ENCODE measurements at regions of chr10 and their contacts with region 1.

Region 1: DNA sequence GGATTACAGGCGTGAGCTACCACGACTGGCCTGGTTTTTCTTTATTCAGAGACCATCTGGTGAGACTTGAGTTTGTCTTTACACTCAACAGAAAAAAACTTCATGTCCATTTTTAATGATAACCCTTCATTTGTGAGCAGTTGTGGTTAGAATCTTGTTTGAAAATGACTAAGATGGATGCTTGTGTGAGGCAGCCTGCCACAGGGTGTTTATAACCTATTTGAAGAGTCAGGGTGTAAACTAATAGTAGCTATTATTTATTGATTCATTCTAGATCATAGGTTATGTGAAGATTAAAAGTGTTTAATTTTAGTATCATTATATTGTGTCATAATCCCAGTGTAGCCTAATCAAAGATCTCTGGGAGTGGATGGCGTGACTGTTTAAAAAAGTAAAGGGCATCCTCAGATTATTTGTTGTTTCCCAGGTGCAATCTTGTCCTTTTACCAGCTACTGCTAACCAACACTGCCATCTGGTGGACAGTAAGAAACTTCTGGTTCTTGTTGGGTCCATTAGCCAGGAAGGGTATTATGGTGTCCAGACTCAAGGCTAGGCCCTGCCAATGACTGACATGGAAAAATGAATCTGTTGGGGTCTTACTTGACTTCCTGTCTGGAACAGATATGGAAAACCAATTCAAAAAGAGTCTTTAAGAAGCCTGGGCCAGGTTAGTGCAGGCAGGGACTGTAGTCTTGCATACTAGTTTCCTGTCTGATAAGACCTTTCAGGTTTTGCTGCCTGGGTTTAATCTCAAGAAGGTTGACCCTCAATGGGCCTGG is 24.9 kb downstream of the NRBF2 start:
- DNase-seq: peak in 1 of 2 donors; percentile 28
- ATAC-seq: peak; percentile 67 to 77 (median 71)
- H3K4me3 ChIP-seq: no peak overlapping the region
- H3K27ac ChIP-seq: no peak overlapping the region
- H3K4me1 ChIP-seq: peaks cover 0 to 24% (median 13%) of the 10 kb centered on the region in 9 donors
- H3K27me3 ChIP-seq: no peaks in the 10 kb centered on the region
- CTCF ChIP-seq: peak; percentile 55 to 89 (median 84)

Region 2: DNA sequence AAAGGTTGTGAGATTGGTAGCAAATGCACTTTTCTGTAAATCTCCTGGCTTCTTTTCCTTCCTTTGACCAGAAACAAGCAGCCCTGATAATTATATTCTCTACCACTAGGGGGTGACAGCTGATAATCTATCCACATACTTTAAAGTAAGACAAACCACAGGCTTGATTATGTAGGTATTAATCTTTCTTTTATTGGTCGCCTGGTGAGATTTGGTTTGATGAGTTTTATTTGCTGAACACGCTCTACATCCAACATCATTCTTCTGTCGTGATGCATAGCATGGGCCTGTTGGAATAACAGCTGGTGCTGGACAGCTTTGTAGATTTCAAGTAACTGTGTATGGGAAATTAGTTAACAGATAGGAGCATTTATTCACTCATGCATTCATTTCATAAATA is 720.3 kb before region 1 on chr10:
- intact Hi-C with region 1: loop called in 7 of 10 experiments (anchors 2 to 10 kb)
- DNase-seq: peak in 1 of 2 donors; percentile 29
- ATAC-seq: peak in 4 of 8 donors; percentile 56 to 69 (median 63)
- H3K4me3 ChIP-seq: no peak overlapping the region
- H3K27ac ChIP-seq: no peak overlapping the region
- H3K4me1 ChIP-seq: peaks cover 0 to 11% (median 0%) of the 10 kb centered on the region in 9 donors
- H3K27me3 ChIP-seq: peaks cover 0 to 7% (median 0%) of the 10 kb centered on the region in 7 donors
- CTCF ChIP-seq: peak; percentile 52 to 88 (median 74)

Region 3: GRCh38 chr10:62594093-62594520 is 563.9 kb before region 1 on chr10:
- intact Hi-C with region 1: loop called in 6 of 10 experiments (anchors 1 to 5 kb)
- DNase-seq: peak; percentile 45 to 65
- ATAC-seq: peak; percentile 79 to 92 (median 85)
- H3K4me3 ChIP-seq: no peak overlapping the region
- H3K27ac ChIP-seq: no peak overlapping the region
- H3K4me1 ChIP-seq: peaks cover 0 to 6% (median 0%) of the 10 kb centered on the region in 9 donors
- H3K27me3 ChIP-seq: peaks cover 0 to 9% (median 0%) of the 10 kb centered on the region in 7 donors
- CTCF ChIP-seq: peak; percentile 70 to 94 (median 87)

Region 4: GRCh38 chr10:62610649-62611229 is 547.3 kb before region 1 on chr10:
- intact Hi-C with region 1: loop called in 5 of 10 experiments (anchors 5 to 10 kb)
- DNase-seq: peak; percentile 28 to 41
- ATAC-seq: peak; percentile 55 to 78 (median 68)
- H3K4me3 ChIP-seq: no peak overlapping the region
- H3K27ac ChIP-seq: no peak overlapping the region
- H3K4me1 ChIP-seq: peaks cover 0 to 20% (median 0%) of the 10 kb centered on the region in 9 donors
- H3K27me3 ChIP-seq: peaks cover 0 to 9% (median 0%) of the 10 kb centered on the region in 7 donors
- CTCF ChIP-seq: peak; percentile 53 to 89 (median 84)

Region 5: DNA sequence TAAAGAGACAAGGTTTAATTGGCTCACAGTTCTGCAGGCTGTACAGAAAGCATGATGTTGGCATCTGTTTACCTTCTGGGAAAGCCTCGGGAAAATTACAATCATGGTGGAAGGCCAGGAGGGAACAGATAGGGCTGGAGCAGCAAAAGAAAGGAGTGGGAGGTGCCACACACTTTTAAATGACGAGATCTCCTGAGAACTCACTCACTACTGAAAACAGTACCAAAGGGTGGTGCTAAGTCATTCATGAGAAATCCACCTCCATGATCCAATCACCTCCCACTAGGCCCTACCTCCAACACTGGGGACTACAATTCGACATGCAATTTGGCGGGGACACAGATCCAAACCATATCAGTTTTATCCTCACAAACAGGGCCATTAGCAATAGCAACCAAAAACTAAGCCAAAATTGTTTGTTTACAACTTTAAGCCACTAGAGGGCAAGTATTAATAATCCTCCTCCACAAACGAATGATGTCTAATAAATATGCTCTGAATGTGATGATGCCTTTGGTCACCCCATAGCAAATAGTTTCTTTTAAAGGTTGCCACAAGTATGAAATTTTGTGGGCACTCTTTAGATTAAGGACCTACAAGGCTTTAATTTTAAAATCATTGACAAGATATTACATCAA is 154.1 kb before region 1 on chr10:
- intact Hi-C with region 1: loop called in 6 of 10 experiments (anchors 5 to 10 kb)
- DNase-seq: no peak
- ATAC-seq: no peak
- H3K4me3 ChIP-seq: no peak overlapping the region
- H3K27ac ChIP-seq: no peak overlapping the region
- H3K4me1 ChIP-seq: no peaks in the 10 kb centered on the region
- H3K27me3 ChIP-seq: peaks cover 0 to 18% (median 0%) of the 10 kb centered on the region in 7 donors
- CTCF ChIP-seq: peak in 8 of 9 donors; percentile 9 to 43 (median 30)

Region 6: DNA sequence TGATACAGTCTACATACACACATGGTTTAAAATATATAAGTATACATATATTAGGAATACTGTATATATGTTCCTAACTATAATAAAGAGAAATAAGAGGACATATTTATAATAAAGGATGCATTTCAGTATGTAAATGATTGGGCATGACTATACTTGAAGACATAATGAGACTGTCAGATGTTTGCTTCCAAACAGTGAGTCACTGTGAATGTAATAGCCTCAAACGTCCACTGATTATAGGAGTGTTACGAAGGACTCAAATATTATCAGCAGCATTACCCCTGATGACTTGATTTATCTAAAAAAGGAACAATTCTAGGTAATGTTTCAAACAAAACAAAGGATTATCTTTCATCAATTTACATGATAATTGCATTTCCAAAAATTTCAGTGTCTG is 64.8 kb before region 1 on chr10:
- intact Hi-C with region 1: loop called in 4 of 10 experiments (anchors 10 kb)
- DNase-seq: no peak
- ATAC-seq: no peak
- H3K4me3 ChIP-seq: no peak overlapping the region
- H3K27ac ChIP-seq: no peak overlapping the region
- H3K4me1 ChIP-seq: no peaks in the 10 kb centered on the region
- H3K27me3 ChIP-seq: no peaks in the 10 kb centered on the region
- CTCF ChIP-seq: no peak